ENCODE measurements at regions of chr7 and their contacts with region 1.

Region 1: DNA sequence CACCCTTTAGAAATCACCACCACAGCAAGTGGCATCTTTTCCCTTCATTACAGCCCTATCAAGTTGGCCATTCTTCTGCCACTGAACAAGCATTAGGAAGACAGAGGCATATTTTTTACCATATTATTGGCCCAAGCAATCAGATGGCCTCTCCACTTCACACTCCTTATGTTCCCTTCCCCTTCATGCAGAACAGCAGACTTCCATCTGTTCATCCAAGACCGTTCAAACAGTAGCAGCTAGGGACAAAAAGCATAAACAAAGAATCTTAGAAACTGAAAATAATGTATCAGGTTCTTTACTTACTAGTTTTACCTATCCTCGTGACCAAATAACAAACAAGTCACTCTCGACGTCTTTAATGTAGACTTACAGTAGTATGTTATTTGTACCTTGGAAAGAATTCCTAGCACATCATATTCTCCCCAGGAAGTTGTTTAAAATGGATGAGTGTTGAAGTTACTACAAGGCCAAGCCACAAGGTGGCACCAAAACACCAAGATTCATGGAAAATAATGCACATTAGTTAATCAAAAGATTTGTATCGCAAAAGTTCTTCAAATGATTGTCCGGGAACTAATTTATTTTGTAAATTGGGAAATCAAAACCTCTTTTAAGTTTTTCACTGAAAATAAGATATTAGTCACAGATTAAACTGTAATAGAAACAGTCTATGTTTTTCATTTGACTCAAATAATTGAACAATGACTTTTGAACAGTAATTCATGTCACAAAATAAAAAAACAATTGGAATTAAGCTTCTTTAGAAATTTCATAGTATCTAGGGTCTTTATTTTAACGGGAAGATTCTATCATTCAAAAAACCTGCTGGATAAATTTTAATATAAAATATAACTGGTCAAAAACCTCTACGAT is 112.1 kb downstream of the VPS41 start:
- DNase-seq: peak in 2 of 3 donors; percentile 40 to 61
- ATAC-seq: no peak
- H3K4me3 ChIP-seq: no peak overlapping the region
- H3K27ac ChIP-seq: no peak overlapping the region
- H3K4me1 ChIP-seq: no peaks in the 10 kb centered on the region
- H3K27me3 ChIP-seq: no peaks in the 10 kb centered on the region

Region 2: GRCh38 chr7:38382684-38383083 is 414.2 kb before region 1 on chr7:
- intact Hi-C with region 1: no loop called
- DNase-seq: no peak
- ATAC-seq: peak; percentile 77 to 81
- H3K4me3 ChIP-seq: no peak overlapping the region
- H3K27ac ChIP-seq: no peak overlapping the region
- H3K4me1 ChIP-seq: no peaks in the 10 kb centered on the region
- H3K27me3 ChIP-seq: no peaks in the 10 kb centered on the region

Region 3: DNA sequence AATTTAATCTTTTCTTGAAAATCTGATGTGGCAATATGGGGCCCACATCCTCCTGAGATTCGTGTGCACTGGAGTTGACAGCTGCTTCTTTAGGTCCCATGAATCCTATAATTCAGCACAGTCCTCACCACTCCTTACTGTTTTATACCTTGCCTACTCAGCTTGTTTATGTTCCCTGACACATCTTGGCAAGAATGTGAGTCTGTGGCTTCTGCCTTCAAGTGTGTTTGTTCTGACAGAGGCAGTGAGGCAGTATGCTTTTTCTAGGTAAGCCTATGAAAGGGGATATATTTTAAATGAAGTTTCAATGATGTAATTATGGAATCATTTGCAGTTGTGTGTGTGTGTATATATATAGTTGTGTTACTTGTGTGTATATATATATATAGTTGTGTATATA is 272.1 kb before region 1 on chr7:
- intact Hi-C with region 1: no loop called
- DNase-seq: no peak
- ATAC-seq: no peak
- H3K4me3 ChIP-seq: no peak overlapping the region
- H3K27ac ChIP-seq: no peak overlapping the region
- H3K4me1 ChIP-seq: no peaks in the 10 kb centered on the region
- H3K27me3 ChIP-seq: no peaks in the 10 kb centered on the region

Region 4: DNA sequence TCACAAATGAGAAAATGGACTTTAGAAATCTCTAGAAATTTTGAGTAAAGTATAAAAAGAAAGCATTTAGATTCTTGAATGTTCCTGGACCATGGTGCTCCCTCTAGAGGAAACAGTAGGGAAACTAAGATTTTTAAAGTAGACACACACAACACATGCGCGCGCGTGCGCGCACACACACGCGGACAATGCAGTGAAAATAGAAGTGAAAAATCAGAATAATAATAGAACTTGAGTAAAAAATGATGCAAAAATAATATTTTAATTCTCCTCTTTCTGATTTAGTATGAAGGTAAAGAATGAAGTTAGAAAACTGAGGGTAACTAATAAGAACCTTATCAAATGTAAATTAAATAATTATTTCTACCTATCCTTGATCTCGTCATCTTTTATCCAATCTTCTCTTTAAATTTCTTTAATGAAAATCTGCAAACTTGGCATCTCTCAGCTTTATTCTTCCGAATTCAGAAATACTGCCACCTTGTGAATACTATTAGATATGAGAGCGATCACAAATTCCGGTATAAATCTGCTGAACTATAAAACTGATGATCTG is 48.7 kb before region 1 on chr7:
- intact Hi-C with region 1: no loop called
- DNase-seq: peak in 1 of 3 donors; percentile 64
- ATAC-seq: no peak
- H3K4me3 ChIP-seq: no peak overlapping the region
- H3K27ac ChIP-seq: no peak overlapping the region
- H3K4me1 ChIP-seq: no peaks in the 10 kb centered on the region
- H3K27me3 ChIP-seq: no peaks in the 10 kb centered on the region

Region 5: DNA sequence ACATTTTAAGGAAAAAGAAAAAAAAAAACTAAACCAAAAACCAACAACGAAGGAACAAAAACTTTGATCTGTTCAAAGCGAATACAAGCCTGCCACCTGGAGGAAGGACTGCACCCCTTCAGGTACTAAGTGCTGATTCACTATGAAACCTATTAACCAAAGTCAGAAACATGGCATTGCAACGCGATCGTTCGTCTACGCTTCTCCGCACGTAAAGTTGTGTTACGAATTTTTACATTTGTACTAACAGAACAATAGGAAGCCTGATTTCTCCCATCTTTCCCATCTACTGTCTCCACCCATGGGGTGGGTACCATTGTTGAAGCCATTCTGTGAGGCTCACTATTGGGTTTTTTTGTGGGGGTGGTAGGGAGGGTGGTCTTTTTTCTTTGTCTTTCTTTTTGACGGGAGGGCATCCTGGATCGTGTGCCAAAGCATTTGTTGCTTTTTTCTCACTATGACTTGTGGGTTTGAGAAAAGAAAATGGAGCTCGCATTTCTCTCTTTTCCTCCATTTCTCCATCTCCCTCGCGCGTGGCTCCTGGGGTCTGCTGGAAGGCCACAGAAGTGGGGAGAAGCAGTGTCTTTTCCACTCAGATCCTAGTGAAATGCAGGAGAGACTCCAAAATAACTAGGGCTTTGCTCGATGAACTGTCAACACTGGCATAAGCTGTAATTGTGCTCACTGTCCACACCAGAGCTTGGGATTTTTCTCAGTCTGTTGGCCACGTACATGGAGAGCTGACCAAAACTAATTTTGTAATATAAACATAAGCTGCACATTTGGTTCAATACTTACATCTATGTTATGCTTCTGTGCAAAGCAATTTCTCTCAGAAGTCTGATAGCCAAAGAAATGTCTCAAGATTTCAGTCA is 668.4 kb after region 1 on chr7:
- intact Hi-C with region 1: loop called in 1 of 4 experiments (anchors 5 kb)
- DNase-seq: peak in 1 of 3 donors; percentile 15
- ATAC-seq: peak; percentile 68 to 76
- H3K4me3 ChIP-seq: no peak overlapping the region
- H3K27ac ChIP-seq: no peak overlapping the region
- H3K4me1 ChIP-seq: no peaks in the 10 kb centered on the region
- H3K27me3 ChIP-seq: no peaks in the 10 kb centered on the region

Region 6: GRCh38 chr7:39517240-39517639 is 720.4 kb after region 1 on chr7:
- intact Hi-C with region 1: loop called in 3 of 4 experiments (anchors 2 to 10 kb)
- DNase-seq: no peak
- ATAC-seq: no peak
- H3K4me3 ChIP-seq: no peak overlapping the region
- H3K27ac ChIP-seq: no peak overlapping the region
- H3K4me1 ChIP-seq: no peaks in the 10 kb centered on the region
- H3K27me3 ChIP-seq: no peaks in the 10 kb centered on the region

Region 7: GRCh38 chr7:39527296-39527695 is 730.4 kb after region 1 on chr7:
- intact Hi-C with region 1: loop called in 1 of 4 experiments (anchors 10 kb)
- DNase-seq: no peak
- ATAC-seq: no peak
- H3K4me3 ChIP-seq: no peak overlapping the region
- H3K27ac ChIP-seq: no peak overlapping the region
- H3K4me1 ChIP-seq: no peaks in the 10 kb centered on the region
- H3K27me3 ChIP-seq: no peaks in the 10 kb centered on the region

Measured in right cardiac atrium (tissue), 5 donors.